ENCODE measurements at regions of chr1 and their contacts with region 1.

Region 1: DNA sequence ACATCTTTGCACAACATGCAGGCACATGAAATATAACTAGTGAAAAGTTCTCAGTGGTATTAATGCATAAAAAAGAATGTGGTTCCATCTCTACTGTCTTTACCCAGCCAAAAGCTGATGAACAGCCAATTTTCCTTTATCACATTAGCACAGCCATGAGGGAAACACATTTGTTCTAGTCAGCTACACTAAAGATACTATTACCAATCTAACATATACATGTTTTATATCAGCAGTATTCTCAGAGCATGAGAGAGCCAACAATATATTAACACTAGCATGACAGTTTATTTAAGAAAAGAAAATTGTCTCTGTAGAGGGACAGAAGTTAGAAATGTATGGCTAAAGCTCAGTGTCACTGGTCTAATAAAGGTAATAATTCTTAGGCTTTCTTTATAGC is 56.3 kb downstream of the USH2A start:
- DNase-seq: no peak
- H3K4me3 Mint-ChIP-seq: no peak overlapping the region
- H3K27ac Mint-ChIP-seq: no peak overlapping the region
- H3K4me1 Mint-ChIP-seq: no peaks in the 10 kb centered on the region
- H3K27me3 Mint-ChIP-seq: peaks cover 57% of the 10 kb centered on the region
- CTCF ChIP-seq: no peak

Region 2: GRCh38 chr1:216617081-216617875 is 250.3 kb after region 1 on chr1:
- CTCF ChIA-PET with region 1: no interaction called
- POLR2A ChIA-PET with region 1: no interaction called
- intact Hi-C with region 1: loop called (anchors 1 kb)
- DNase-seq: no peak
- H3K4me3 Mint-ChIP-seq: no peak overlapping the region
- H3K27ac Mint-ChIP-seq: no peak overlapping the region
- H3K4me1 Mint-ChIP-seq: no peaks in the 10 kb centered on the region
- H3K27me3 Mint-ChIP-seq: peaks cover 7% of the 10 kb centered on the region
- CTCF ChIP-seq: no peak

Measured in MCF 10A (cell line).